Activated naive CD8-positive, alpha-beta T cell treated with anti-CD3 and anti-CD28 coated beads, Interleukin-2, amount 10 ng/mL, durations not matched to agents 7 days and 5 days (primary cell): ENCODE measurements at regions of chr2 and their contacts with region 1.

Region 1: DNA sequence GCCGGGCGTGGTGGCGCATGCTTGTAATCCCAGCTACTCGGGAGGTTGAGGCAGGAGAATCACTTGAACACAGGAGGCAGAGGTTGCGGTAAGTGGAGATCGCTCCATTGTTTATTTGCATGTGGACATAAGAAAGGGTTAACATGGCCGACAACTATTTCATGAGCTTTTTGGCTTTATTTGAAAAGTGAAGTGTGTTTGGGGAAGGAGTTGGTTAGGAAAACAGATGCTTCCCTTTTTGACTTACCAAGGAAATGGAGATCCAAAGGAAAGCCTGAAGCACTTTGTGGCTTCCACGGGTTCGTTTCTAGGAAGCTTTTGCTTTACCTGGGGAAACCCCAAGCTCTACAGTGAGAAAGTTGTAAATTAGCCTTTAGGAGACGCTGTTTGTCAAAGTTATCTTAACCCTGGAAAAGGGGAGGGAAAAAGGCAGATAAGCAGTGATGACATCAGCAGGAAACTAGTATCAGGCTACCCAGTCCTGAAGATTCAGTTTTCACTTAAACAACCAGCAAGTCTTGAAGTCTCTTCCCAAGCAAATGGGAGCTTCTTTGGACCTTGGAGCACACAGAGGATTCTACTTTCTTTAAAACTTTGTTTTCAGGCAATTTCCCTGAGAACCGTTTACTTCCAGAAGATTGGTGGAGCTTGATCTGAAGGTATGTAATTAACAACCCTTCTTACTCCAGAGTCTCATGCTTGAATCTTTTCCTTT is at the start of gene CASP10:
- DNase-seq: no peak
- ATAC-seq: peak; percentile 78
- H3K4me3 Mint-ChIP-seq: peak within 1 kb of the TSS; percentile 96
- H3K27ac Mint-ChIP-seq: peak within 1 kb of the TSS; percentile 92
- H3K4me1 Mint-ChIP-seq: peaks cover 41% of the 10 kb centered on the region
- H3K27me3 Mint-ChIP-seq: no peaks in the 10 kb centered on the region
- total RNA-seq, gene CASP10: 45.2 to 46.1 TPM

Region 2: DNA sequence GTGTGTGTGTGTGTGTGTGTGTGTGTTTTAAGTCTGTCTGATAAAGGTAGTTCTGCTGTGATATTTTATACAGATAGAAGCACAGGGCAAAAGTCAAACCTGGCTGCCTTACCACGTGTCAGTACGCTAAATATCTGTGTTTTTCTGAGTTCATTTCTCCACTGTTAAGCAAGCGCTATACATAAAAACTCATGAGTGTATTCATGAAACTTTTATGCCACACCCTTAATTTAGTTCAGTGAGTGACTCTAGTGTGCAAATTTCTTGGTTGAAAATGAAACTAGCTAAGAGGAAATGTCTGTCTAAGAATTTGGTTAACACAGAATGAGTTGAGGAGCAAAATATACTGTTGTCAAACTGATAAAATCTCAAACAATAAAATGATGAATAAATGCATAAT is 11.3 kb after region 1 on chr2:
- POLR2A ChIA-PET with region 1: interaction called, 11 read pairs
- DNase-seq: no peak
- ATAC-seq: peak; percentile 66
- H3K4me3 Mint-ChIP-seq: peak overlapping the region; percentile 79
- H3K27ac Mint-ChIP-seq: peak overlapping the region; percentile 89
- H3K4me1 Mint-ChIP-seq: peaks cover 52% of the 10 kb centered on the region
- H3K27me3 Mint-ChIP-seq: no peaks in the 10 kb centered on the region

Region 3: DNA sequence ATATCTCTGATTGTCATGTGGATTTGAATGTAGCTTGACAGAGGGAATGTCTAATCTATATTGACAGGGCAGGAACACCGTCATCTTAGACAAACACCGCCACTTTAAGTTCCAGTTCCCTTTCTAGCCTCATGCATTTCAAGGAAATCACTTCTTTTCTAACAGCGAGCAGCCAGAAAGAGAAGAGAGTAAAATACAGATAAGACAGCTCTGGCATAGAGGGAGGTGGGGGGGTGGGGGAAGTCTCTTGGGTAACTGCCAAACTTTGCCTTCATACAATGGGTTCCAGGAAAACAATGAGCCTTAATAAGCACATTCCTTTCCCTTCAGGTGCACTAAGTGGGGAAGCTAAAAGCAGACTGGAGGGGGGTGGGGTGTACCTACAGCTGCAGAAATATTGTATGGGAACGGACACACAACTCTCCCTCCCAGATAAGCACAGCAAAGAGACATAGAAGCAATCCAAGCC is 37.3 kb after region 1 on chr2:
- POLR2A ChIA-PET with region 1: interaction called, 11 read pairs
- DNase-seq: no peak
- ATAC-seq: no peak
- H3K4me3 Mint-ChIP-seq: no peak overlapping the region
- H3K27ac Mint-ChIP-seq: peak overlapping the region; percentile 73
- H3K4me1 Mint-ChIP-seq: peaks cover 50% of the 10 kb centered on the region
- H3K27me3 Mint-ChIP-seq: no peaks in the 10 kb centered on the region